Mammary epithelial cell (primary cell): ENCODE measurements at regions of chr14 and their contacts with region 1.

Region 1: DNA sequence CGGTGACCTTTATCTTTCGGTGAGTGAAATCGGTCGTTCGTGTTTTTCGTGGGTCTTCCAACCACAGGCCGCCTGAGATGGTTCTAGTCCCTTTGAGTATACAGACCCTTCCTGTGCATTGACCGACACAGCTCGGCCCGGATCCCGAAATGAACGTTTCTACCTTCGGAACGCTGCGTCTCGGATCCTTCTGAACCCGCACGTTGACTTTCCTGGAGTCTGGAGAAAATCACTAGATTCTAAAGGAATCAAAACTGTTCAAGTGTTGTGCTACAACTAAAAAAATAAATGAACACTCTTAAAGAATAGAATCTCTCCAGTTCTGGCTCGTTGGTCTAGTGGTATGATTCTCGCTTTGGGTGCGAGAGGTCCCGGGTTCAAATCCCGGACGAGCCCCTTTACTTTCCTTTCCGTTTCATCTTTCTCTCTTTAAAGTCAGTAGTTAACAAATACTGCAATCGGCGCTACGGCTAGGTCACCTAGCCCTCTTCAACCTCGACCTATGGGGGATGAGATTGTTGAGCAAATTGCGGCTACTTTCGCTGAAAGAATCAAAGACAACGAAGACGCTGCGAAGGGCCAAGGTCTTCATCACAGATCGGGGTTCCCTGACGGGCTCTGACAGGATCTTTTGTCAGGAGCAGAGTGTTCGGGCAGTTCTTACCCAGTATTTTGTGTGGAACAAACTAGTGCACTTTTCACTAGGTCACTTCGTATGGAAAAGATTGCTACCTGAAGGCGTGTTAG is 8.6 kb downstream of the OR6S1 start:
- DNase-seq: peak; percentile 85
- H3K4me3 ChIP-seq: peak overlapping the region; percentile 11 to 55 (median 55)
- H3K27ac ChIP-seq: no peak overlapping the region
- H3K4me1 ChIP-seq: peaks cover 18% of the 10 kb centered on the region
- H3K27me3 ChIP-seq: no peaks in the 10 kb centered on the region
- CTCF ChIP-seq: no peak

Region 2: DNA sequence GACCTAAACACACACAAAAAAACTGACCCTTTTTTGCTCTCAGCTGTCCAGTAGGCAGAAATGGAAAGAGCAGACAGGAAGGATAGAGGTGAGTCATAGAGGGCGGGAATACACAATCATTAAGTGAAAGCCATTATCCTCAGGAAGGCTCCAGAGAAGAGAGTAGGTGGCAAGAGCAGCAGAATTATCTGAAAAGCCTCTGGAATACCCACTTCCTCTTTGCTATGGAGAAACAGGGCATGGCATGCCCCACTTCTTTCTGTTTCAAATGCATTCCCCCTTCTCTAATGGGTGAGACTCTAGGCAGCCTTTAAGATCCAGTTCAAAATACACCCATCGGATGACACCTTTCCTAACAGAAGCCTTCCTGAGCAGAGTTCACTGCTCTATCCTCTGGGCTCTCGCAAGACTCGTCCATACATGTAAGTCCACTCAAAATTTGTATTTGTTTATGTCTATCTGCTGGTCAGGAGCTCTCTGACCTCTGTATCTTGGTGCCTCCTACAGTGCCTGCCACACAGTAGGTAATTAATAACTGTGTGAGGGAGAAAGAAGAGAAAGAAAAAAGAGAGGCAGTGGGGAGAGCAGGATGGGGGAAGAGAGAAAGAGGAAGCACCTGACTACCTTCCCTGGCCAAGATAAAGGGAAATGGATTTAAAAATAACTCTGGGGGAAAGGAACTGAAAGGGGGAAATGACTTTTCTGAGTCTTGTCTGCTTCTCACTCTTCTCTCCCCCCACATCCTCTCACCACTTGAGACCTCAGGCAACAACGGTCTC is 205.4 kb before region 1 on chr14:
- CTCF ChIA-PET with region 1: no interaction called
- dilution Hi-C with region 1: no loop called
- in situ Hi-C with region 1: no loop called
- intact Hi-C with region 1: no loop called
- DNase-seq: peak; percentile 58
- H3K4me3 ChIP-seq: peak overlapping the region in 1 of 3 experiments; percentile 4
- H3K27ac ChIP-seq: no peak overlapping the region
- H3K4me1 ChIP-seq: peaks cover 7% of the 10 kb centered on the region
- H3K27me3 ChIP-seq: no peaks in the 10 kb centered on the region
- CTCF ChIP-seq: no peak

Region 3: GRCh38 chr14:20652996-20653975 is 20.4 kb after region 1 on chr14:
- CTCF ChIA-PET with region 1: interaction called, 3 read pairs
- dilution Hi-C with region 1: no loop called
- in situ Hi-C with region 1: no loop called
- intact Hi-C with region 1: loop called (anchors 1 kb)
- DNase-seq: peak; percentile 90
- H3K4me3 ChIP-seq: peak overlapping the region; percentile 4 to 36 (median 14)
- H3K27ac ChIP-seq: no peak overlapping the region
- H3K4me1 ChIP-seq: no peaks in the 10 kb centered on the region
- H3K27me3 ChIP-seq: peaks cover 2% of the 10 kb centered on the region
- CTCF ChIP-seq: no peak

Region 4: DNA sequence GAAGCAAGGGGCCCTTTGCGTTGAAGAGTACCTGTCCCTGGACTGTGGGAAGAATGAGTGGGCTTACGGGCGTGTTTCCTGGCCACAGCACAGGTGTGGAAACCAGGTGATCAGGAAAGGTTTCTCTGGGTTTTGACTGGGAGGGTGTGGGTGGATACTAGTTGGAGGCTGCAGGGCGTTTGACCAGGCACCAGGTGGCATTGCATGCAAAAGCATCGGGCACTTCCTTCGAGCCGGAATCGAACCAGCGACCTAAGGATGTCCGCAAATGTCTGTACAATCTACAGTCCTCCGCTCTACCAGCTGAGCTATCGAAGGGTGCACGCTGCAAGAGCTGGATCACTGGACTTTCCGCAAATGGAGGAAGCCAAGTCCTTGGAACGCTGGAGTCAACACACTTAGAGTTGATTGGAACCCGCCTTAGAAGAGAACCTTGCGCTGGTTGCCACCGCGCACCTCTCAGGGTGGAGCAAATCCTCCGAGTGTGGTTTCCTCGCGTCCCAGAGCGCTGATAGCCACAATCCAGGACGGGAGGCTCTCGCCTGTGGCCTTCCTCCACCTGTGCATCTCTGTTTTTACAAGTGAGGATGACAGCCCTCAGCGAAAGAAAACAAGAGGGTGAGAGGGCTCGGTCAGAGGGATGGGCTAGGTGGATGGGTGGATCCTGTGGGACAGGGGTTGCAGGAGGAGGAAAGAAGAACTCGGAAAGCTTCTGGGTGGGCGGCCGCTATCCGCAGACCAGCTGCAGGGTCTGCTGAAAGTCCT is 30.3 kb after region 1 on chr14:
- CTCF ChIA-PET with region 1: no interaction called
- dilution Hi-C with region 1: no loop called
- in situ Hi-C with region 1: no loop called
- intact Hi-C with region 1: loop called (anchors 2 kb)
- DNase-seq: peak; percentile 89
- H3K4me3 ChIP-seq: peak overlapping the region; percentile 20 to 44 (median 43)
- H3K27ac ChIP-seq: no peak overlapping the region
- H3K4me1 ChIP-seq: no peaks in the 10 kb centered on the region
- H3K27me3 ChIP-seq: no peaks in the 10 kb centered on the region
- CTCF ChIP-seq: peak; percentile 41 to 78